AG04450 (cell line): ENCODE measurements at regions of chr5 and their contacts with region 1.

Region 1: DNA sequence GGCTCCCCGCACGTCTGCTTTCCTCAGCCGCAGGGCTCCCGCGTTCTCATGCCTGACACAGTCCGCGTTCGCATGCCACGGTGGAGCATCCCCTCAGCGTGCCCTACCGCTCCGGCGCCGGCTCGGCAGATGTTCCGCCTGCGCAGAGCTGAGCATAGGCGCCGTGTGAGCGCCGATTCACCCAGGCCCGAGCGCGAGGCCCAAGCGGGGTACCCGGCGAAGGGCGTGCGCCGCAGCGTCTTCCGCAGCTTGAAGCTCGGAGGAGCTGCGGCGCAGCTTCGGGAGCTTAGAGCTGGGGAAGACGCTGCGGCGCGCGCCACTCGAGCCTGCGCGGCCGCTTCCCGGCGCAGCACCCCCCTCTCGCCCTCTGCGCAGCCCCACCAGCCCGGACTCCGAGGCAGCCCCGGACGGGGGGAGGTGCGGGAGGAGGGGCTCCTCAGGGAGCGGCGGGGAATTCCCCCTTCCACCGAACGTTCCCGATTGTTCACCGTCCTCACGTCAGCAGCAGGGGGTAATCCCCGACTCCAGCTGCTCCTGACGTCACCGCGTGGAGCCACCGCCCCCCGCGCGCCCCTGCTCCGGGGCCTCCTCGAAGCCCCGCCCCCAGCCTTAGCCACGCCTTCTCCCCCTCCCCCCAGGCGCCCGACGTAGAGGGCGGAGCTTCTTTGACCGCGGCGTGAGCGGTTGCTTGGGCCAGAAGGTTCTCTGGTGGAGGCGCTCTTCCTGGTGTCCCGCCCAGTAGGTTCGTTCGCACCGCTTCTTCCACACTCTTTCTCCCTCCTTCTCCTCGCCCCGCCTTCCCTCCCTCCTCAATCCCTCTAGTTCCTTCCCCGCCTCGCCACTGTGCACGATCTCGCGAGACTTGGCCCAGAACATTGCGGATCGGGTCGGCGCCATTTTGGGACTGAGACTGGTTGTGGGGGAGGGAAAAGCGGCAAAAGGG is at the start of gene GPBP1:
- DNase-seq: peak; percentile 99
- H3K4me3 ChIP-seq: peak within 1 kb of the TSS; percentile 93
- H3K27ac ChIP-seq: peak within 1 kb of the TSS; percentile 99
- H3K27me3 ChIP-seq: no peaks in the 10 kb centered on the region
- CTCF ChIP-seq: no peak
- polyA plus RNA-seq, gene GPBP1: 44.5 and 67.7 TPM in 2 replicates

Region 2: DNA sequence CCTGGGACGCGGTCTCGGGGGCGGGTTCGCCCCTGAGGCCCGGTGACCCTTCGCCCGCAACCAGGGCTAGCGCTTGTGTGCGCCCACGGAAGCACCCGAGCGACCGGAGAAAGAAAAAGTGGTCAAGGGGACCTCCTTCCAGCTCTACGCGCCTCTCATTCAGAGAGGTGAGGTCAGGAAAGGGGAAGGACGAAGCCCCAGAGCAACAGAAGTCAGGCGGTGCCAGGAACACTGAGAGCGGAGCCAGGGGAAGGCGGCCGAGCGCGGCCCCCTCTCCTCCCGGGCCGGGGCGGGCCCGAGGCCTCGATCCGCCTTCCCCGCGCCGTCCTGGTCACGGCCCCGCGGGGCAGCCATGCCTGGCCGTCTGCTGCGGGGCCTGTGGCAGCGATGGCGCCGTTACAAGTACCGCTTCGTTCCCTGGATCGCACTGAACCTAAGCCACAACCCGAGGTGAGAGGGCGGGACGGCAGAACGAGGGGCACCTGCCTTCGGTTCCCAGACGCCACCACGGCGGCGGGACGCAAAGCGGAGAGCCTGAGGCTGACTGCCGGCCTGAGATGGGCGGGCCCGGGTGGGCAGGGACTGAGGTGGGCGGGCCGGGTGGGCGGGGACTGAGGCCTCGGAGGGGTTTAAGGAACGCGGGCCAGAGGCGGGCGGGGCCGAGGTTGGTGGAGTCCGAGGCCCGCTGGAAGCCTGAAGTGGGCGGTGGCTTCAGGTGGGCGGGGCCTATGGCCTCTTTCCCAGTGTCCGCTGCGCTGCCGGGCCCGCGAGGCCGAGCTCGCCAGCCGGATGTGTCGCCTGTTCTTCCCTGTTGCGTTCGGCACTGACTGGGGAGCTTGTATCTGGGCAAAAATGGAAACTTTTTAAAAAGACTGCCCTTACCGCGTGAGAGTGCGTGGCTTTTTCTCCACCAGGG is 263.9 kb before region 1 on chr5 and contains the start of gene SETD9:
- CTCF ChIA-PET with region 1: no interaction called
- POLR2A ChIA-PET with region 1: interaction called, 15 read pairs
- DNase-seq: peak; percentile 93
- H3K4me3 ChIP-seq: peak within 1 kb of the TSS; percentile 79
- H3K27ac ChIP-seq: peak within 1 kb of the TSS; percentile 93
- H3K27me3 ChIP-seq: no peaks in the 10 kb centered on the region
- CTCF ChIP-seq: no peak
- polyA plus RNA-seq, gene SETD9: 8.6 and 12.1 TPM in 2 replicates

Region 3: GRCh38 chr5:56950626-56951125 is 222.8 kb before region 1 on chr5:
- CTCF ChIA-PET with region 1: no interaction called
- POLR2A ChIA-PET with region 1: interaction called, 11 read pairs
- DNase-seq: peak; percentile 21
- H3K4me3 ChIP-seq: peak overlapping the region; percentile 77
- H3K27ac ChIP-seq: peak overlapping the region; percentile 63
- H3K27me3 ChIP-seq: peaks cover 2% of the 10 kb centered on the region
- CTCF ChIP-seq: no peak

Region 4: DNA sequence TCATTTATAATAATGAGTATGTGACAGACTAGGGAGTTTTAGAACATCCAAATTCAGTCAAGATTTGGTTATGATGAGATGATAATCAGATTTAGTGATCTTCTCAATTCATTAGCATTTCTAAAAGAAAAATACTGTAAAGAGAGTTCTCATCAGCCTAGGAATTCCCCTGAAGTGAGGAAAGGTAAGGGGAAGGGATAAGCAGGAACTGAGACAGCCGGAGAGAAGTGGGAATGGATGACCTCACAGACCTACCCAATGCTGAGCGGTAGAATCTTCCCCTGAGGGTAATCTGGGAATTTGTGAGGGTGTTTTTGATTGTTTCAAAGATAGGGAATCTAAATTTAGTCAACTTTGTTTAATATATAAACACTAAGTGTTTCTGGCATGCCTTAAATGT is 16.3 kb before region 1 on chr5:
- CTCF ChIA-PET with region 1: no interaction called
- POLR2A ChIA-PET with region 1: no interaction called
- DNase-seq: no peak
- H3K4me3 ChIP-seq: no peak overlapping the region
- H3K27ac ChIP-seq: no peak overlapping the region
- H3K27me3 ChIP-seq: no peaks in the 10 kb centered on the region
- CTCF ChIP-seq: no peak

Region 5: GRCh38 chr5:57947181-57947580 is 773.7 kb after region 1 on chr5:
- CTCF ChIA-PET with region 1: no interaction called
- POLR2A ChIA-PET with region 1: no interaction called
- DNase-seq: no peak
- H3K4me3 ChIP-seq: no peak overlapping the region
- H3K27ac ChIP-seq: no peak overlapping the region
- H3K27me3 ChIP-seq: no peaks in the 10 kb centered on the region
- CTCF ChIP-seq: no peak